Aorta (tissue), 5 donors: ENCODE measurements at regions of chr2 and their contacts with region 1.

Region 1: GRCh38 chr2:169330555-169331198 is 31.7 kb downstream of the LRP2 start:
- DNase-seq: no peak
- ATAC-seq: no peak
- H3K4me3 ChIP-seq: no peak overlapping the region
- H3K27ac ChIP-seq: no peak overlapping the region
- H3K4me1 ChIP-seq: no peaks in the 10 kb centered on the region
- H3K27me3 ChIP-seq: no peaks in the 10 kb centered on the region

Region 2: GRCh38 chr2:169203928-169204327 is 126.7 kb before region 1 on chr2:
- intact Hi-C with region 1: no loop called
- DNase-seq: no peak
- ATAC-seq: no peak
- H3K4me3 ChIP-seq: no peak overlapping the region
- H3K27ac ChIP-seq: no peak overlapping the region
- H3K4me1 ChIP-seq: no peaks in the 10 kb centered on the region
- H3K27me3 ChIP-seq: no peaks in the 10 kb centered on the region

Region 3: DNA sequence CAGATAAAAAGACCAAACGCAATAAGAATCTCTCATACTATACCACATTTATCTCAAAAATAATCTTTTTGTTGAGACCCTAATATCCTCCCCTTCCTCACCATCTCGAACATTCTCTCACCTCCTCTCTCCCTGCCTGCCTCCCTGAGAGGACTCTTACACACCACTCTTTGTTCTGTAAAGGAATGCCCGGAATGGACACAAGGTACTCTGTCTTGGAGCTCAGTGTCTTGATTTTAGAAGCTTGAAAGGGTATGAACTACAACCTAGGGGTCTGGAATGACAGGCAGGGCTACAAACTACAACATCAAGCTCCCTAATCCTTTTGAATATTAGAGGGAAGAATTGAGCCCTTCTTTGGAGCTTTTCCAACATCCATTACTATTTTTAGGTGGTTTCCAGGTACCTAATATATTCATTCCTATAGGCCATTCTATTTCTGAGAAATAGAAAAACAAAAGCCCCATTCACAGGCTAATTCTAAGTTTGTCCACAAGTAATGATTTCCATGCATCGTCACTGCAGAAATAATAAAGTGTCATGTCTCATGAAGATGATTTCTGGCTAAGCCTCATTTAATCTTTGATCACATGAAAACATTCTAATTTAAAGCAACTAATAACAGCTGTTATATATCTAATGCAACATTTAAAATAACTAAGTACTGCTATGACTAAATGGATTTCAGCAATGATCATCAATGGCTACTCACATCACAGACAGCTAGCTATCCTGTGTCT is 28.9 kb before region 1 on chr2:
- intact Hi-C with region 1: loop called in 1 of 2 experiments (anchors 1 kb)
- DNase-seq: no peak
- ATAC-seq: no peak
- H3K4me3 ChIP-seq: no peak overlapping the region
- H3K27ac ChIP-seq: no peak overlapping the region
- H3K4me1 ChIP-seq: no peaks in the 10 kb centered on the region
- H3K27me3 ChIP-seq: peaks cover 0 to 1% of the 10 kb centered on the region in 2 donors

Region 4: DNA sequence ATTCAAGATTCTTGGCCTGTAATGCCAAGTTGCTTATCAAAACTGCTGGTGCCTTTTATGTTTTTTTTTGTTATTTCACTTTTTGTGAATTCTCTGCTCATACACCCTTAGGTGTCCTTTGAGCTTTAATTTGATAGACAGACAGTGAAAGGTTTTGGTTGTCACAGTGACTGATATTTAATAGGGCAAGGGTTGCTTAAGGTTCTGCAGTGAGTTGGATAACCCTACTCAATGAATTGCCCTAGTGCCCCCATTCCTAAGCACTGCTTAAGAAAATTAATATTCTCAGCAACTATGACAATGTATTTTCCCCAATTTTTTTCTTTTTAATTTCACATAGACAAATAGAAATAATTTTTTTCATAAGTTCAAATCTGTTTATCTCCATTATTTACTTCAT is 268.9 kb after region 1 on chr2:
- intact Hi-C with region 1: no loop called
- DNase-seq: no peak
- ATAC-seq: no peak
- H3K4me3 ChIP-seq: no peak overlapping the region
- H3K27ac ChIP-seq: no peak overlapping the region
- H3K4me1 ChIP-seq: no peaks in the 10 kb centered on the region
- H3K27me3 ChIP-seq: no peaks in the 10 kb centered on the region